Naive thymus-derived CD4-positive, alpha-beta T cell (primary cell): ENCODE measurements at regions of chr13 and their contacts with region 1.

Region 1: DNA sequence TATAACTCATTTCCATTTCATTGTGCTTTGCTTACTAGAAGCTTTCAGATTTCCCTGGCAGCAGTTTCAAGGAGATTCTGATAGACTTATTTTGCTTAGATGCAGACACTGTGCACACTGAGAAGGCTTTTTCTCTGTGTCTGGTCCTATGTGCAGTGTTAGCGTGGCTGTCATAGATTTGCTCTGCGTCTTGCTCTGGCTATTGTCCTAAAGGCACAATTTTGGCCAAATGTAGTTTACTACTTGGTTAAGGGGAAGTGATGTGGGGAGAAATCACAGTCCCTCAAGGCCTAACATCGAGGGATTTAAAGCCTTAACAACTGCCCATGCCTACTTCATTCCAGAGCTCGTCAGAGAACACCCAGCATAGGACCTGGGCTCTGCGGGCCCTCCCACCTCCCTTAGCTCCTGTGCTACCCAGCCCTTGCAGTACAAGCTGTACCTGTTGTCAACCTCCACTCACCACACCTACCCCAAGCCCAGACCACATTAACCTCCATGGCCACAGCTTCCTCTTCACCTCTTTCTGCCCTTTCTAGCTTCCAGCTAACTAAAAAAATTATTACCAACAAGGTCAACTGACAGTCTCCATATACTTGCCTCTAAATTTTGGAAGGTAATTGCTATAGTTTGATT is 38.9 kb upstream of the KATNAL1 start:
- DNase-seq: peak in 7 of 9 donors; percentile 59 to 86 (median 73)
- ATAC-seq: peak; percentile 94
- H3K4me3 ChIP-seq: peak overlapping the region; percentile 7
- H3K4me3 Mint-ChIP-seq: peak overlapping the region; percentile 46 to 82 (median 75)
- H3K27ac ChIP-seq: no peak overlapping the region
- H3K27ac Mint-ChIP-seq: peak overlapping the region; percentile 23 to 84 (median 62)
- H3K4me1 ChIP-seq: peaks cover 29 to 31% of the 10 kb centered on the region in 2 donors
- H3K4me1 Mint-ChIP-seq: peaks cover 35 to 60% (median 48%) of the 10 kb centered on the region in 7 donors
- H3K27me3 ChIP-seq: no peaks in the 10 kb centered on the region
- H3K27me3 Mint-ChIP-seq: peaks cover 0 to 2% (median 0%) of the 10 kb centered on the region in 5 donors

Region 2: GRCh38 chr13:29754473-29754806 is 591.8 kb before region 1 on chr13:
- CTCF ChIA-PET with region 1: no interaction called
- POLR2A ChIA-PET with region 1: no interaction called
- intact Hi-C with region 1: no loop called
- DNase-seq: no peak
- ATAC-seq: no peak
- H3K4me3 ChIP-seq: no peak overlapping the region
- H3K4me3 Mint-ChIP-seq: no peak overlapping the region
- H3K27ac ChIP-seq: no peak overlapping the region
- H3K27ac Mint-ChIP-seq: no peak overlapping the region
- H3K4me1 ChIP-seq: peaks cover 0 to 3% of the 10 kb centered on the region in 2 donors
- H3K4me1 Mint-ChIP-seq: peaks cover 6 to 11% (median 6%) of the 10 kb centered on the region in 7 donors
- H3K27me3 ChIP-seq: no peaks in the 10 kb centered on the region
- H3K27me3 Mint-ChIP-seq: peaks cover 0 to 14% (median 4%) of the 10 kb centered on the region in 5 donors

Region 3: GRCh38 chr13:30334663-30335386 is 11.4 kb before region 1 on chr13:
- CTCF ChIA-PET with region 1: no interaction called
- POLR2A ChIA-PET with region 1: interaction called, 4 read pairs
- intact Hi-C with region 1: loop called in 1 of 2 experiments (anchors 2 kb)
- DNase-seq: peak in 5 of 9 donors; percentile 24 to 43 (median 37)
- ATAC-seq: peak; percentile 57
- H3K4me3 ChIP-seq: no peak overlapping the region
- H3K4me3 Mint-ChIP-seq: no peak overlapping the region
- H3K27ac ChIP-seq: no peak overlapping the region
- H3K27ac Mint-ChIP-seq: peak overlapping the region in 2 of 9 donors; percentile 8 to 9
- H3K4me1 ChIP-seq: peaks cover 0 to 8% of the 10 kb centered on the region in 2 donors
- H3K4me1 Mint-ChIP-seq: peaks cover 7 to 40% (median 19%) of the 10 kb centered on the region in 7 donors
- H3K27me3 ChIP-seq: no peaks in the 10 kb centered on the region
- H3K27me3 Mint-ChIP-seq: no peaks in the 10 kb centered on the region

Region 4: GRCh38 chr13:30388406-30389283 is 42.4 kb after region 1 on chr13:
- CTCF ChIA-PET with region 1: interaction called, 3 read pairs
- POLR2A ChIA-PET with region 1: interaction called, 6 read pairs
- intact Hi-C with region 1: loop called in 1 of 2 experiments (anchors 2 kb)
- DNase-seq: no peak
- ATAC-seq: peak; percentile 13
- H3K4me3 ChIP-seq: peak overlapping the region; percentile 41
- H3K4me3 Mint-ChIP-seq: peak overlapping the region; percentile 67 to 93 (median 78)
- H3K27ac ChIP-seq: peak overlapping the region; percentile 51
- H3K27ac Mint-ChIP-seq: peak overlapping the region; percentile 68 to 95 (median 90)
- H3K4me1 ChIP-seq: peaks cover 6 to 40% of the 10 kb centered on the region in 2 donors
- H3K4me1 Mint-ChIP-seq: peaks cover 26 to 68% (median 57%) of the 10 kb centered on the region in 7 donors
- H3K27me3 ChIP-seq: no peaks in the 10 kb centered on the region
- H3K27me3 Mint-ChIP-seq: no peaks in the 10 kb centered on the region

Region 5: DNA sequence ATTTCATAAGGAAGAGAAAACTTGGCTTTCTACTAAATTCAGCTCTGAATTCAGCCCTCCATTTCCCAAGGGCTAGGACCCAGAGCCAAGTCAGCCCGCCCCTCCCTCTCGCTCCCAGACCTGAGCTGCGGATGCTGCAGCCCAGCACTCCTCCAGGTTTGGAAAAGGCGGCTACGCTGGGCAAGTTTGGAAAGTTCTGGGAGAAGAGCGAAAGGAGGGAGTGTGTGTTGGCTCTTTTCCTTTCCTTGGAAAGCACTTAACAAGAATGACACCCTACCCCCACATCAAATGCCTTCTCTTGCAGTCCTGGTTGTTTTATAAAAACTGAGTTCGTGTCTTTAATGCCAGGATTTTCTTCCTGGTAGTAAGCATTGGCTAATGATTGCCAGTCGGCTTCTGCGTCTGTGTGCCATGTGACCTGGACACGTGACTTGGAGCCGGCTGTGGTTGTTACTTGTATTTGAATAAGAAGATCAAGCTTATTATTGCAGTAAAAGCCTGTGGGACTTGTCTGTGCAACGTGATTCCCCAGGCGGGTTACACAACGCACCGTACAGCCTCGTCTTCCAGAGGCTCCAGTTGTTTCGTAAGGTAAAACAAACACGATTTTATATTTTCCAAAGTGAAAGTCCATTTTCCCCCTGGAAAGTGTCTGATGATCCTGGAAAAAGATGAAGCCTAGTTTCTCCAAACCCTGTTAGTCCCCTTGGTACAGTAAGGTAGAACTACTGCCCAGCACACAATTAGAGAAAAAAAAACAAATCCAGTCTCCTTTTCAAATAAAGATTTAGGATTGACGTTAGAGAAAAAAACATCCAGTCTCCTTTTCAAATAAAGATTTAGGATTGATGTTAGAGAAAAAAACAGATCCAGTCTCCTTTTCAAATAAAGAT is 49.2 kb after region 1 on chr13:
- CTCF ChIA-PET with region 1: interaction called, 3 read pairs
- POLR2A ChIA-PET with region 1: interaction called, 5 read pairs
- intact Hi-C with region 1: loop called in 1 of 2 experiments (anchors 1 kb)
- DNase-seq: peak; percentile 22 to 83 (median 71)
- ATAC-seq: peak; percentile 82
- H3K4me3 ChIP-seq: peak overlapping the region; percentile 71
- H3K4me3 Mint-ChIP-seq: peak overlapping the region; percentile 83 to 97 (median 88)
- H3K27ac ChIP-seq: peak overlapping the region; percentile 78
- H3K27ac Mint-ChIP-seq: peak overlapping the region; percentile 90 to 97 (median 95)
- H3K4me1 ChIP-seq: peaks cover 16 to 31% of the 10 kb centered on the region in 2 donors
- H3K4me1 Mint-ChIP-seq: peaks cover 17 to 58% (median 54%) of the 10 kb centered on the region in 7 donors
- H3K27me3 ChIP-seq: no peaks in the 10 kb centered on the region
- H3K27me3 Mint-ChIP-seq: no peaks in the 10 kb centered on the region

Region 6: GRCh38 chr13:30422054-30422839 is 76.0 kb after region 1 on chr13 and contains the start of gene UBE2L5:
- CTCF ChIA-PET with region 1: no interaction called
- POLR2A ChIA-PET with region 1: no interaction called
- intact Hi-C with region 1: loop called in 1 of 2 experiments (anchors 1 kb)
- DNase-seq: peak; percentile 41 to 89 (median 56)
- ATAC-seq: peak; percentile 92
- H3K4me3 ChIP-seq: peak within 1 kb of the TSS; percentile 67
- H3K4me3 Mint-ChIP-seq: peak within 1 kb of the TSS; percentile 80 to 94 (median 89)
- H3K27ac ChIP-seq: peak within 1 kb of the TSS; percentile 38
- H3K27ac Mint-ChIP-seq: peak within 1 kb of the TSS; percentile 64 to 93 (median 86)
- H3K4me1 ChIP-seq: no peaks in the 10 kb centered on the region
- H3K4me1 Mint-ChIP-seq: peaks cover 7 to 29% (median 15%) of the 10 kb centered on the region in 7 donors
- H3K27me3 ChIP-seq: no peaks in the 10 kb centered on the region
- H3K27me3 Mint-ChIP-seq: no peaks in the 10 kb centered on the region
- total RNA-seq, gene UBE2L5: not detected